ENCODE measurements at regions of chr5 and their contacts with region 1.

Region 1: DNA sequence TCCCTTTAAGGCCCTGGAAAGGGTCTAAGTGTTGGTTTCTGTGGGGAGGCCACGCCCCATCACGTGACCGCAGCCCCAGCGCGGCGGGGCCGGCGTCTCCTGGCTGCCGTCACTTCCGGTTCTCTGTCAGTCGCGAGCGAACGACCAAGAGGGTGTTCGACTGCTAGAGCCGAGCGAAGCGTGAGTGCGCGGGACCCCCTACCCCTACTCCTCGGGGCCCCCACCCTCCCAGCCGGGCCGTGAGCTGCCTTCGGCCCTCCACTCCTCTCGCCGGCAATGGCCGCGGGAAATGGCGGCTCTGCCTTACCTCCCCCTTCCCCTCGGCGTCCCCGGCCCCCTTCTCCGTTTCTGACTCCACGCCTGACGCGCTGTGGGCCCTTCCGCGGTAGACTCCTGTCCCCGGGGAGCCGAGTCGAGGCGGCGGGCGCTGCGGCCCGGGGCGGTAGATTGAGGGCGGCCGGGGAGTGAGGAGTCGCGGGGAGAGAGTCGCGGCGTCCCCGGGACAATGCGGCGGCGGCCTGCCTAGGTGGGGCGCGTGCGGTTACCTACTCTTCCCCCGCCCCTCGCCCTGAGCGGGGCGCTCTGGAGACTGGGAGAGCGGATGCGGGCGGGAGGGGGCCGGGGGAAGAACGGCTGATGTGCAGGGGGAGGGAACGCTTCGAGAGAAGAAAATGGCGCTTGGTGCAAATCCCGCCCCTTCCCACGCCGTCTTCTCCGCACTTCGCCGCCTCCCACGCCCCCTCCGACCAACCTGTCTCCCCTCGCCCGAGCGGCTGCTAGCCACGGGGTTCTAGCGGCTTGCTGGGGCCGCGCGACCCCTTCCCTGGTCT is at the start of gene SUB1:
- DNase-seq: peak; percentile 96
- ATAC-seq: peak; percentile 87
- H3K4me3 Mint-ChIP-seq: peak within 1 kb of the TSS; percentile 93
- H3K27ac Mint-ChIP-seq: peak within 1 kb of the TSS; percentile 99
- H3K4me1 Mint-ChIP-seq: peaks cover 60% of the 10 kb centered on the region
- H3K27me3 Mint-ChIP-seq: no peaks in the 10 kb centered on the region
- total RNA-seq, gene SUB1: 418 to 458 TPM

Region 2: GRCh38 chr5:31113101-31113500 is 1472.6 kb before region 1 on chr5:
- CTCF ChIA-PET with region 1: no interaction called
- POLR2A ChIA-PET with region 1: no interaction called
- intact Hi-C with region 1: no loop called
- DNase-seq: no peak
- ATAC-seq: no peak
- H3K4me3 Mint-ChIP-seq: no peak overlapping the region
- H3K27ac Mint-ChIP-seq: no peak overlapping the region
- H3K4me1 Mint-ChIP-seq: no peaks in the 10 kb centered on the region
- H3K27me3 Mint-ChIP-seq: no peaks in the 10 kb centered on the region

Region 3: DNA sequence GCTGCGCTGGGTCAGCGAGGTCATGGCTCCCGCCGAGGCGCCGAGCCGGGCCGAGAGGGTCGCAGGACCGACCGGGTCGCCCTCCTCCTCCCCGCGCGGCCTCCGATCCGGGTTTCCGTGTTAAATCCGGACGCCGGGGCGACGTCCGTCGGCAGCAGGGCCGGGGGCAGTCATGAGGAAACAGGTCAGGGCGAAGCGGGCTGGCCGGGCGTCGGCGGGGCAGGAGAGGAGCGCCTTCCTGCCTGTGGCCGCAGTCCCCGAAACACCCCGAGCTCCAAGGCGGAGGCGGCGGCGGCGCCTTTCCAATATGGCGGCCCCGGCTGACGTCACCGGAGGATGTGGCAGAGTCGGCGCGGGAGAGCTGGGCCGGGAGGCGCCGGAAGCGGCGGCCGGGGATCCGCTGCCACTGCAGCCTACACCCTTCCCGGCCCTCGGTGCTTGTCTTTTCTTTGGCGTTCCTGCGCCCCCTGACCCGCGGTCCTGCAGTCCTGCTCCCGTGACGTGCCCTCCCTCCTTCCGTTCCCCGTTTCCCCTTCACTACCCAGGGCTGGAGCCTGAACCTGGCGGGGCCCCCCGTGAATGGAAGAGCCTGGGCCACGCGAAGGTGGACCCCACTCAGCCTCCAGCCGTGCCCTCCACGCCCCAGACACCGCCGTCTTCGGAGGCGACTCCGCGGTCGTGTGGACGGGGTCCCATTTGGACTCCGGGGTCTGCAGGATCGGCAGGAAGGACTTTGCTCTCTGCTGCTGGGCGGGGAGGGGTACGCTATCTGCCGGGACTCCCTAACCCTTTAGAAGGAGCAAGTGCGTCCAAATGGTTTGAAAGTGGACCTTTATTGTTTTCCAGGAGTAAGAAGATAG is 411.4 kb before region 1 on chr5 and contains the start of gene GOLPH3:
- CTCF ChIA-PET with region 1: interaction called, 4 read pairs
- POLR2A ChIA-PET with region 1: interaction called, 4 read pairs
- intact Hi-C with region 1: loop called in 1 of 2 experiments (anchors 1 kb)
- DNase-seq: peak; percentile 98
- ATAC-seq: peak; percentile 86
- H3K4me3 Mint-ChIP-seq: peak within 1 kb of the TSS; percentile 87
- H3K27ac Mint-ChIP-seq: peak within 1 kb of the TSS; percentile 97
- H3K4me1 Mint-ChIP-seq: peaks cover 30% of the 10 kb centered on the region
- H3K27me3 Mint-ChIP-seq: no peaks in the 10 kb centered on the region
- total RNA-seq, gene GOLPH3: 54.2 to 58.3 TPM

Region 4: GRCh38 chr5:32312647-32313523 is 272.8 kb before region 1 on chr5 and contains the start of gene MTMR12:
- CTCF ChIA-PET with region 1: no interaction called
- POLR2A ChIA-PET with region 1: no interaction called
- intact Hi-C with region 1: loop called in 1 of 2 experiments (anchors 1 kb)
- DNase-seq: peak; percentile 100
- ATAC-seq: peak; percentile 97
- H3K4me3 Mint-ChIP-seq: peak within 1 kb of the TSS; percentile 87
- H3K27ac Mint-ChIP-seq: peak within 1 kb of the TSS; percentile 86
- H3K4me1 Mint-ChIP-seq: peaks cover 30% of the 10 kb centered on the region
- H3K27me3 Mint-ChIP-seq: no peaks in the 10 kb centered on the region
- total RNA-seq, gene MTMR12: 21.6 to 22.8 TPM

Region 5: DNA sequence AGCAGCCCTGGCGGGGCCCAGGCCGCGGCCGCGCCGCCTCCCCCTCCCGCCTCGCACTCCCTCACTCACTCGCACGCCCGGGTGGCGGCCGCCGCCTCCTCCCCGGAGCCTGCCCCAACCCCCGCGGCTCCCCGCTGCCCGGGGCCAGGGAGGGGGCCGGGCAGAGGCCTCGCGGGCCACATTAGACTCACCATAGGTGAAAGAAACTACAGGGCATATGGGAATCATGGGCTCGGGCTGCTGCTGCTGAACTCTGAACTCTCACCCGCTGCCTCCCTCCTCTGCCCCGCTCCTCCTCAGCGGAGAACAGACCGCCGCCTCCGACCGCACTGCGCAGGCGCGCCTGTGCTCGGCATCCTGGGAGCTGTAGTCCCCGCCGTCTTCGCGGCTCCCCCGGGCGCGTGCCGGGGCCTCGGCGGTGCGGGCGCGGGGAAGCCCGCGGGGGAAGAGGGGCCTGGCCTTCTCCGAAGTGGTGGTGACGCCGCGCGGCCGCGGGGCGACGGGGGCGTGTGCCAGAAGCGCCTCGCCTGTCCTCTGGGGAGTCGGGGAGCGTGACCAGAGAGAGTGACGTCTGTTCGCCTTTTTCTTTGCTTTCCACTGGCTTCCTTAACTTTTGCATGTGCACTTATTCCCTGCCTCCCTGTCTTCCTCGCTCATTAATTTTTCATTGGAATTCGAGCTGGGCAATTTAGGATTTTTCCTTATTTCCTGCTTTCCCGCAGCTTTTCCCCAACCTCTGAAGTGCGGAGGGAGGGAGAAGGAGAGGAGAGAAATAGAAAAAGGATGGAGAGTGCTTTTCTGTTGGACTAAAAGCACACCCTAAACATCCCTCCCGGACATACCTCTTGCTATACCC is 141.0 kb before region 1 on chr5 and contains the start of gene ZFR:
- CTCF ChIA-PET with region 1: interaction called, 9 read pairs
- POLR2A ChIA-PET with region 1: interaction called, 4 read pairs
- intact Hi-C with region 1: loop called (anchors 1 kb)
- DNase-seq: peak; percentile 97
- ATAC-seq: peak; percentile 90
- H3K4me3 Mint-ChIP-seq: peak within 1 kb of the TSS; percentile 99
- H3K27ac Mint-ChIP-seq: peak within 1 kb of the TSS; percentile 99
- H3K4me1 Mint-ChIP-seq: peaks cover 34% of the 10 kb centered on the region
- H3K27me3 Mint-ChIP-seq: no peaks in the 10 kb centered on the region
- total RNA-seq, gene ZFR: 60.6 to 81.4 TPM

Region 6: DNA sequence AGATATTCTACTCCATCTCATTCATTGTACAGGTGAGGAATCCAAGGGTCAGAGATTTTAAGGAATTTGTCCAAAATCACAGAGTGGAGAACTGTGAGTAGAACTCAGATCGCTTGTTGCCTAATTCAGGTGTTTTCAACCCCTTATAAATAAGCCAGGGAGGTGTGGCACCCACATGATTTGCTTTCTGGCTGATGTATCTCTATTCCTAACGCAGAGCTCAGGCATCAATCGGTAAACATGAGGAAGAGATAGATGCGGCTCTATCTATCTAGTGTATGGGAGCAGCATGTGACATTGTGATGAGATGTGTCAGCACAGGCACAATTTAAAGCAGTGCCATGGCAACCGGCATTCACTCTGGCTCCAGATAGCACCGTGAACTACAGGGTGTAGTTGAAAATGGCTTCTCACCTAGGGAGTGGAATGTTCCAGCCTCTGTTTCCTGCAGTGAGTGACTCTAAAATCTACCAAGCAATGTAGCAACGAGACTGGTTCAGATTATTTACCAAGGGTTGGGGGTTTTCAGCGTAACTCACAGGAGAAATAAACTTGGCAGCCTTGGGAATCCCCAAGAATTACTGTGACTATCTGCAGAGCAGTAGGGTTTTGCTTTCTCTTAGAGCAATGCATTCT is 53.7 kb before region 1 on chr5:
- CTCF ChIA-PET with region 1: interaction called, 16 read pairs
- POLR2A ChIA-PET with region 1: interaction called, 17 read pairs
- intact Hi-C with region 1: loop called (anchors 1 kb)
- DNase-seq: peak; percentile 77
- ATAC-seq: peak; percentile 84
- H3K4me3 Mint-ChIP-seq: peak overlapping the region; percentile 82
- H3K27ac Mint-ChIP-seq: peak overlapping the region; percentile 94
- H3K4me1 Mint-ChIP-seq: peaks cover 54% of the 10 kb centered on the region
- H3K27me3 Mint-ChIP-seq: no peaks in the 10 kb centered on the region

Region 7: DNA sequence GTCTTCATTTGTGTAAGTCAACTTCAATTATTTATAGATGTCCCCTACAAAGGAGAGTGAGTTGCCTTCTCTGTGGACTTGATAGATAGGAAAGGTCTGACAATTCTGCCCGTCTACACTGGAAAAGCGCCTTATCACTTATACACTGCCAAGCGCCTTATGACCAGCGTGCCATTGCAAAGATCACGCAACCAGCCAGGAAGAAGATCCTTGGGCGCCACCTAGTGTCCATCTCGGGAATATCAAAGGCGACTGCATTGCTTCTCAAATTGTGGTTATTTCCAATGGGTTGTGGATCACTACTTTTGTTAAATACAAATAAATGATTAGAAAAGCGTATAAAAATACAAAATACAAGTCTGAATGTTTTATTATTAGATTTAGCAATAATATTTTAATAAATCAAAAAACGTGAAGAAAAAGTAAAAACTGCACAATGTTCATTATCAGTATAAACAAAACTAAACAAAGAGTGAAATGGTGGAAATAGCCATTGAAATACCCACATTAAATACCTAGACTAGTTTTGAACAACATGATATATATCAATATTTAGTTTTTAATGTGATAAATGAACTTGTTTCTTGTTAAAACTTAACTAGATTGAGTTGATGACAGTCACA is 27.5 kb after region 1 on chr5:
- CTCF ChIA-PET with region 1: interaction called, 10 read pairs
- POLR2A ChIA-PET with region 1: no interaction called
- intact Hi-C with region 1: loop called in 1 of 2 experiments (anchors 2 kb)
- DNase-seq: peak; percentile 91
- ATAC-seq: peak; percentile 93
- H3K4me3 Mint-ChIP-seq: no peak overlapping the region
- H3K27ac Mint-ChIP-seq: peak overlapping the region; percentile 67
- H3K4me1 Mint-ChIP-seq: peaks cover 4% of the 10 kb centered on the region
- H3K27me3 Mint-ChIP-seq: no peaks in the 10 kb centered on the region

Region 8: GRCh38 chr5:33212900-33213299 is 627.2 kb after region 1 on chr5:
- CTCF ChIA-PET with region 1: no interaction called
- POLR2A ChIA-PET with region 1: no interaction called
- intact Hi-C with region 1: no loop called
- DNase-seq: no peak
- ATAC-seq: no peak
- H3K4me3 Mint-ChIP-seq: no peak overlapping the region
- H3K27ac Mint-ChIP-seq: no peak overlapping the region
- H3K4me1 Mint-ChIP-seq: no peaks in the 10 kb centered on the region
- H3K27me3 Mint-ChIP-seq: no peaks in the 10 kb centered on the region

Measured in activated CD4-positive, alpha-beta T cell treated with anti-CD3 and anti-CD28 coated beads for 36 hours (primary cell).